Dendritic cell treated with granulocyte-macrophage colony-stimulating factor and Interleukin-4, amounts not matched to agents 40 ng/mL and 50 ng/mL, for 4 days (primary cell): ENCODE measurements at regions of chr1 and their contacts with region 1.

Region 1: DNA sequence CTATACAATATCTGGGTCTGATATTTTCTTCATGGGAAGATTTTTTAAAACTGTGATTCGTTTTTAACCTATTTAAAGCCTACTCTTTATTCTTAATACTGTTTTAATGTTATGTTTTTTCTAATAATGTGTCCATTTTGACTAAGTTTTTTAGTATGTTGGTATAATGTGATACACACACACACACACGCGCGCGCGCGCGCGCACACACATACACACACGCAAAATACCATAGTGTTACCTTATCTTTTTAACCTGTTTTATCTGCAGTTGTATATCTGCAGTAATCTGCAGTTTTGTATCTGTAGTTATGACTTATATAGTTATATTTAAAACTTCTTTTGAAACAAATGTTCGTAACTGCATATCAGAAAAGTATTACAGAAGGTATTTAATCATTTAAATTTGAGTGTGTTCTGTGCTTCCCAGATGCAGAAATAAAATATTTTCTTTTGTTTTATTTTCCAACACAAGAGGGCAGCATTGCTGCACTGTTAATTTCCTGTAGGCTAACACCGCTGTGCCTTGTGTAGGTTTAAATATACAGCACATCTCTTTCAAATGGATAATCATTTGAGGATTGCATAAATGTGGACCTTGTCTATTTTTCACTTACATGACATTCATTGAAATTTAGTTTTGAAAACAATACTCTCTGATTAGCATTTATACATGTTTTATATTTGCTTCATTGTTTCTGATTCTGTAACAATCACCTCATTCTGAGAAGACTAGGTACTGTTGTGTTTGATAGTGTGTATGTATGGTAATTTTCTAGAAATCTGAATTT is 166.1 kb downstream of the PDE4B start:
- H3K4me3 Mint-ChIP-seq: no peak overlapping the region
- H3K27ac Mint-ChIP-seq: no peak overlapping the region
- H3K4me1 Mint-ChIP-seq: peaks cover 6% of the 10 kb centered on the region
- H3K27me3 Mint-ChIP-seq: no peaks in the 10 kb centered on the region

Region 2: DNA sequence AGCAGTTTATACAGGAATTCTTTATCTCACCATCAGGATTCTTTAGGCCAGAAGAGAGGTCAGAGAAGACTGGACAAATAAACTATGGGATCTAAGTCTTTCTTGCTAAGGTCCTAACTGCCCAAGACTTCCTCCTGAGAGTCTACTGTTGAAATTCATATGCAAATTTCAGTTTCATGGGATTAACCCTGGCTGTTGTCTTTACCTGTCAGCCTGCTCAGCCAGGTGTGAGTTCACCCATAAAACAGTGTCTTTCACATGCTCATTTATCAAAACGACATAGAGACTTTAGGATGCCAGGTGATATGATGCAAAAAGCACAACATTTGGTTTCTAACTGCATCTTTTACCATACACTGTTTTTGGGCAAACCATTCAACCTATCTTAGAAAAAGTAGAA is 44.9 kb after region 1 on chr1:
- intact Hi-C with region 1: no loop called
- H3K4me3 Mint-ChIP-seq: no peak overlapping the region
- H3K27ac Mint-ChIP-seq: no peak overlapping the region
- H3K4me1 Mint-ChIP-seq: no peaks in the 10 kb centered on the region
- H3K27me3 Mint-ChIP-seq: no peaks in the 10 kb centered on the region

Region 3: DNA sequence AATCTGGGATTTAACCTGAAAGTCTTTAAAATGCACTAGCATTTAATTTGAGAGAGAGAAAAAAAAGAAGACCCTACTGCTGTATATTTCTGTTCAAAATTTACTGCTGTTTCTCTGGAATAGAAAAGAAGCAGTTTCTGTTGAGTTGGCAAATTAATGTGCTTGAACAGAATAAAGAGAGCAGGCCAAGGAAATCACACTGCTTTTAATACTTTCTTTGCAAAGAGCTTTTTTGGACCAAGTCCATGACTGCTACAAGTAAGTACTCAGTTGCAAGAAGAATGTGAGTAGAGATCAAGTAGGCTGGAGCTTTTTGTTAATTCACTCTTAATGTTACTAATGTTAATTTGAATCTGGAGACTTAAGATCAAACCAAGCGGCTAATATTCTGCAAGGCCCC is 239.0 kb after region 1 on chr1:
- intact Hi-C with region 1: no loop called
- H3K4me3 Mint-ChIP-seq: no peak overlapping the region
- H3K27ac Mint-ChIP-seq: no peak overlapping the region
- H3K4me1 Mint-ChIP-seq: no peaks in the 10 kb centered on the region
- H3K27me3 Mint-ChIP-seq: no peaks in the 10 kb centered on the region

Region 4: DNA sequence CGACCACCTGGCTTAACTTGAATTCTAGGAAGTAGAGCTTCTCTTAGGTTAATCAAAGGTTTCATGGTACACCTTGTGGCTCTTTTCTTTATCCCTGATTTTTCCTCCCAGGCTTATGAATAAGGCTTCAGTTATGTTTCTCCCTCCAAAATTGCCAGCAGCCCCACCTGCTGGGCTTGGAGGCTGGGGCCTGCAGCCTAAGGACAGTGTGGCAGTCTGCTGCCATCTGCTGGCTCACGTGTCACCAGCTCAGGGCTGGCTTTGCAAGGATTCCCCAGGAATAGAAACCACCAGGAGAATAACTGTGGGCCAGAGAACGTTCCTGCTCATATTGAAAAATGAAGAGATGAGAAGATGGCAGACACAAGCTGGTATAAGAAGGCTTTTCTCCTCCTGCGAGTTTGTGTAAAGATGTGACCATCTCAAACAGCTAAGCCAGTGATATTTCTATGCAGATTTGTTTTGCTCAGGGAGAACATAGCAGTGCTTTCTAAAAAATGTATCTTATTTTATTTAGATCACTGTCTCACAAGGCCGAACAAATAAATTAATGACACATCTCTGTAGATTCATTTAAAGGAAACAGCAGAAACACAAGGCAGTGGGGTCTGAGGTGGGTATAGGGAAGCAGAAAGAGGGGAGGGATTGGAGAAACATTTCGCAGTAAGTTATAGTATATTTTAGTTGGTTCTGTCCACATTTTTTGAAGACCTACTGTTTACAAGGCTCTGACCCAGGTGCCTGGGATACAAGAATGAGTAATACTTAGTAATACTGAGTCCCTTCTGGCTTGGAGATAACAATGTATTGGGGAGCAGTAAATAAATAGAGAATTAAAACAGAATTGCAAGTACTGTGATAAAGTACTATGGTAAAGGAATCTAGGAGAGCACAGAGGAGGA is 284.1 kb after region 1 on chr1:
- intact Hi-C with region 1: loop called (anchors 1 kb)
- H3K4me3 Mint-ChIP-seq: no peak overlapping the region
- H3K27ac Mint-ChIP-seq: no peak overlapping the region
- H3K4me1 Mint-ChIP-seq: no peaks in the 10 kb centered on the region
- H3K27me3 Mint-ChIP-seq: no peaks in the 10 kb centered on the region